ENCODE measurements at regions of chr5 and their contacts with region 1.

Region 1: DNA sequence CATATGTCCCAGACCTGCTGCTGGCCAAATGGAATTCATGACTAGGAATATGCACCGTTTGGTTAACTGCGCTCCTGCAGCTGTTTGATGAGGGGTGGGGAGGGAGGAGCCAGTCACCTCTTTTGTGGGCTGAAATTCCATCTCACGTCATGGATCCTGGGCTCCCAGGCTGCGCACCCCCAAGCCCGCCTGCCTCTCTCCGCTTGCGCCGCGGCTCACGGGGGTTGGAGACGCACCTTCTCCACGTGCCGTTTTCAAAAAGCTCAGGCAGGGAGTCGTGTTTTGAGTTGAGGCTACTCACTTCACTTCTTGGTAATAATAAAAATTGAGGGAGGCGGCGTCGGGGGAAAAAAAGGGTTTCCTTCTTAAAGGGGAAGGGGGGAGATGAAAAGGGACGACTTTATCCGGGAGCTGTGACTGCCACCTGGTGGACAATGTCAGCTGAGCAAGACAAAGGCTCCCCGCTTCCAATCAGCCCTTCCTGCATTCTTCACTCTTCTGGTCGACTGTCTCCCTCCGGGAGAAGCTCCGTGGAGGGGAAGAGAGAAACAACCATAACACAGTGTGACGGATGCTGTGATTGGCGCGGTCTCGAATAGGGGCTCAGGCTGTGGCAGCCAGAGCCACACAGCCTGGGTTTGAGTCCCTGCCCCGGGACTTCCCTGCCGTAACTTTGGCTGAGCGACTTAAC is 15.9 kb upstream of the C5orf47 start:
- DNase-seq: peak; percentile 85
- ATAC-seq: peak; percentile 91
- H3K4me3 ChIP-seq: peak overlapping the region; percentile 55
- H3K27ac ChIP-seq: peak overlapping the region; percentile 42
- H3K4me1 ChIP-seq: peaks cover 16% of the 10 kb centered on the region
- H3K27me3 ChIP-seq: no peaks in the 10 kb centered on the region
- CTCF ChIP-seq: peak; percentile 86

Region 2: GRCh38 chr5:173623296-173623771 is 349.7 kb before region 1 on chr5:
- intact Hi-C with region 1: loop called (anchors 5 kb)
- DNase-seq: no peak
- ATAC-seq: no peak
- H3K4me3 ChIP-seq: no peak overlapping the region
- H3K27ac ChIP-seq: no peak overlapping the region
- H3K4me1 ChIP-seq: no peaks in the 10 kb centered on the region
- H3K27me3 ChIP-seq: no peaks in the 10 kb centered on the region
- CTCF ChIP-seq: no peak

Region 3: DNA sequence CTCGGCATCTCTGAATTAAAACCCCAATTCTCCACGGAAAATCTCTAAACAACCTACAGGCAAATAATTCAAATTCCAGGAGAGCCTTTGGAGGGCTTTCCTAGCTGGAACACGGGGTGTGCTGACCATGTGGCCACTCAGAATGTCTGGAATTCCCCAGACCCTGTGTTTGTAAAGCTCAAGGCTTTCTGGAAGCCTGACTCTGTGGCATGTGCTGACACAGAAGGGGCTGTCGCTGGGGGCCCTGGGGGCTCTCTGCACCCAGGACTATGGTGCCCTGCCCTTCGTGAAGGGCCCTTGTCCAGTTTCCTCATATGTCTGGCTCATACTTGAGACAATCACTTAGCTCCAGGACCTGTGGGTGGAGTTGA is 327.6 kb before region 1 on chr5:
- intact Hi-C with region 1: no loop called
- DNase-seq: peak; percentile 71
- ATAC-seq: peak; percentile 79
- H3K4me3 ChIP-seq: no peak overlapping the region
- H3K27ac ChIP-seq: no peak overlapping the region
- H3K4me1 ChIP-seq: no peaks in the 10 kb centered on the region
- H3K27me3 ChIP-seq: no peaks in the 10 kb centered on the region
- CTCF ChIP-seq: no peak